ENCODE measurements at regions of chr1 and their contacts with region 1.

Region 1: DNA sequence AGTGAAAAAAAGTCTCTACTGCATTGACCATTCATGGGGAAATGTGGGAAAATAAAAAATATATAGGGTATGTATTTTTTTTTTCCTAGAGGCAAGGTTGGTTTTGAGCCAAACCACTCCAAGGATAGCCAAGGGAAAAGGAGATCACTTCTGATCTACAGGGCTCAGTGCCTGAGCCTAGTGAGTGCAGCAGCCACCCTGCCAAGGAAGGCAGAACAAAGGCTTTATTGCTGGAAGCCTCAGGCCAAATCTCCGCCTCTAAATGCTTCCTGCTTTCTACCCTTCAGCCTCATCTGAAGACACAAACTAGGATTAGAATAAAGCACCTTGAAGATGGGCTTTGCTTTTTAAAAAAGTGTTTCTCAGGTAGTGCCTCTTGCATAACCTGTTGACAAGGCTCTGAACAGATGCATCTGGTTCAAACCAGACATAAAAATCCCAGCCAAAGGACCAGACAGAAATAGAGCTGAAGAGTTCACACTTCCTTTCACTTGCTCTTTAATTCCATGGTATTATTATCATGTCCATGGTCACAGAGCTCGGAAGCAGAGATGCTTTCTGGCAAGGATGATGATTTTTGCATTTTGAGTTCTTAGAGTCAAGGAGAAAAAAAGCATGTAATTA is 10.5 kb downstream of the C1orf115 start:
- DNase-seq: peak; percentile 28
- H3K4me3 Mint-ChIP-seq: no peak overlapping the region
- H3K27ac Mint-ChIP-seq: no peak overlapping the region
- H3K4me1 Mint-ChIP-seq: no peaks in the 10 kb centered on the region
- H3K27me3 Mint-ChIP-seq: no peaks in the 10 kb centered on the region
- CTCF ChIP-seq: no peak

Region 2: DNA sequence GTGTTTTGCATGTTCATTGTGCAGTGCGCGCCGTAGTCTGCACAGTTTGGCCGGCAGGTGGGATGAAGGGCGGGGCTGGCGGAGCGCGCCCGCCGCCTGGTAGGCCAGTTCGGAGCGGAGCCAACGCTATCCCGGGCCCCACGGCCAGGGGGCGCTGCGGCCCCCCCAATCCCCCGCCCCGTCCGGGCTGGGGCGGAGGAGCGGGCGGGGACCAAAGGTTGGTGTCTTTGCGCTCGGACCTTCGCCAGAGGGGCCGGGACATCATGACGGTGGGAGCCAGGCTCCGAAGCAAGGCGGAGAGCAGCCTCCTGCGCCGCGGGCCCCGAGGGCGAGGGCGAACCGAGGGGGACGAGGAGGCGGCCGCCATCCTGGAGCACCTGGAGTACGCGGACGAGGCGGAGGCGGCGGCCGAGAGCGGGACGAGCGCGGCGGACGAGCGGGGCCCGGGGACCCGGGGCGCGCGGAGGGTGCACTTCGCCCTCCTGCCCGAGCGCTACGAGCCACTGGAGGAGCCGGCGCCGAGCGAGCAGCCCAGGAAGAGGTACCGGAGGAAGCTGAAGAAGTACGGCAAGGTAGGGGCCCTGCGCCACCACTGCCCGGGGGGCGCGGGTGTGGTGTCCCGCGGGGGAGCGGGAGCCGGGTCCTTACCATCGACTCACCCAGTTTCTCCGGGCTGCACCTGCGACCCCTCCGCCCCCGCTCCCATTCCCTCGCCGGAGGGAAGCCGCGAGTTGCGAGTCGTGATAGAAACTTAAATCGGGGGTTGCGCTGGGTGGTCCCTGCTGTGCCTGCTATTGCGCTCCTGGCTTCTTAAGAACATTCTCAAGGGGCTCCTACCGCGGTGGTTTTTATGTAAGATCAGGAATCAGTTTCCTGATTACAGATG is 10.3 kb before region 1 on chr1 and contains the start of gene C1orf115:
- CTCF ChIA-PET with region 1: interaction called, 28 read pairs
- POLR2A ChIA-PET with region 1: interaction called, 3 read pairs
- intact Hi-C with region 1: no loop called
- DNase-seq: peak; percentile 81
- H3K4me3 Mint-ChIP-seq: peak within 1 kb of the TSS; percentile 83
- H3K27ac Mint-ChIP-seq: no peak within 1 kb of the TSS
- H3K4me1 Mint-ChIP-seq: peaks cover 7% of the 10 kb centered on the region
- H3K27me3 Mint-ChIP-seq: no peaks in the 10 kb centered on the region
- CTCF ChIP-seq: peak; percentile 100
- total RNA-seq, gene C1orf115: 1.6 TPM in 2 replicates